Prostate gland (tissue), 2 donors: ENCODE measurements at regions of chr1 and their contacts with region 1.

Region 1: GRCh38 chr1:51583532-51583931 is 33.4 kb upstream of the OSBPL9 start:
- DNase-seq: peak; percentile 78
- H3K4me3 ChIP-seq: no peak overlapping the region
- H3K27ac ChIP-seq: peak overlapping the region; percentile 32 to 59
- H3K4me1 ChIP-seq: peaks cover 3% of the 10 kb centered on the region
- H3K27me3 ChIP-seq: no peaks in the 10 kb centered on the region
- CTCF ChIP-seq: no peak
- POLR2A ChIP-seq: no peak

Region 2: GRCh38 chr1:51526248-51526647 is 57.3 kb before region 1 on chr1:
- intact Hi-C with region 1: no loop called
- DNase-seq: no peak
- H3K4me3 ChIP-seq: no peak overlapping the region
- H3K27ac ChIP-seq: no peak overlapping the region
- H3K4me1 ChIP-seq: no peaks in the 10 kb centered on the region
- H3K27me3 ChIP-seq: no peaks in the 10 kb centered on the region
- CTCF ChIP-seq: no peak
- POLR2A ChIP-seq: no peak

Region 3: GRCh38 chr1:51612349-51612998 is 28.9 kb after region 1 on chr1:
- intact Hi-C with region 1: loop called (anchors 2 kb)
- DNase-seq: no peak
- H3K4me3 ChIP-seq: no peak overlapping the region
- H3K27ac ChIP-seq: no peak overlapping the region
- H3K4me1 ChIP-seq: no peaks in the 10 kb centered on the region
- H3K27me3 ChIP-seq: no peaks in the 10 kb centered on the region
- CTCF ChIP-seq: no peak
- POLR2A ChIP-seq: no peak

Region 4: DNA sequence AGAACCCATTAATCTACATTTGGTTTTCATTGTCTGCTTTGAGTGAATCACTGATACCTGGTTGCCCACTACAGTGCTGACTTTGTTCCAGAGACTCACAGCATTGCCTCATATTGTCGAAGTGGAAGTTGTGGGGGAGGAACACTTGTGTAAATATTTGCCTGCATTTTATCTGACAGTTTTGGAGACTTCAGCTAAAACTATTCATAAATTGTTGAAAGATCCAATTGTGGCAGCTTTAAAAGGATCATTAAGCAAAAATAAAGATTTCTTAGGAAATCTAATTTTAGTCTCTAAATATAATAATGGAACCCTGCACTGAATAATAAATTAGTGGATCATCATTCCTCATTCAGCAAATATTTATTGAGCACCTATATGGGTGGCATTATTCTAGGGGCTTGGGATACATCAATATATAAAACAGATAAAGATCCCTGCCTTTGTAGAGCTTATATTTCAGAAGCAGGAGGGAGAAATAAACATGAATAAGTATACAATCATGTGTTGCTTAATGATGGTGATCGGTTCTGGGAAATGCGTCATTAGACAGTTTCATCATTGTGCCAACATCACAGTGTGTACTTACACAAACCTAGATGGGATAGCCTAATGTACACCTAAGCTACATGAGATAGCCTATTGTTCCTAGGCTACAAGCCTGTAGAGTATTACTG is 106.9 kb after region 1 on chr1:
- intact Hi-C with region 1: no loop called
- DNase-seq: no peak
- H3K4me3 ChIP-seq: no peak overlapping the region
- H3K27ac ChIP-seq: peak overlapping the region in 1 of 2 donors; percentile 14
- H3K4me1 ChIP-seq: no peaks in the 10 kb centered on the region
- H3K27me3 ChIP-seq: no peaks in the 10 kb centered on the region
- CTCF ChIP-seq: no peak
- POLR2A ChIP-seq: no peak